Caco-2 (cell line): ENCODE measurements at regions of chr19 and their contacts with region 1.

Region 1: DNA sequence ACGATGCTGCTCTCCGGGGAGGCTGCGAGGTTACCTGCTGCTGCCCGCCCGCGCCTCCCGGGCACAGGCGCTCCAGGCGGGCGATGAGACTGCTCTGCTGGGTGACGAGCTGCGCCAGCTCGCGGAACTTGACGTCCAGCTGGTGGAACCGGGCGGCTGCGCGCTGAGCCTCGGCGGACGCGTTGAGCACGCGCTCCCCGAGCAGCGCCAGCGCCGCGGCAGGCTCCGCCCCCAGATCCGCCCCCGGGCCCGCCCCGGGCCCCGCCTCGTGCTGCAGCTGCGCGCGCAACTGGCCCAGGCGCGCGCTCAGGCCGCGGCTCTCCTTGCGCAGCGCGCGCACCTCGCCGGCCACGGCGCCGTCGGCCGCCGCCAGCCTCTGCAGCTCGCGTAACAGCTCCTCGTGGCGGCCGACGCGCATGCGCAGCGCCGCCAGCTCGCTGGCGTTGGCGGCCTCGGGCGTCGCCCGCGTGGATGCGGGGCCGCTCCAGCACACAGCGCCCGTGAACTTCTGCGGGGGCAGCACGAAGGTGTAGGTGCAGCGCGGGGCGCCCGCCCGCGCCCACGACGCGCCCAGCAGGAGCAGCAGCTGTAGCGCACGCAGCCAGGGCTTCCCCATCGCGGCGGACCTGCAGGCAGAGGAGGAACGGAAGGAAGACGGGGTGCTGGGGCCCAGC is 6.4 kb downstream of the ANGPTL6 start:
- DNase-seq: peak; percentile 85 to 94
- H3K4me3 ChIP-seq: peak overlapping the region; percentile 54
- H3K4me3 Mint-ChIP-seq: peak overlapping the region; percentile 67
- H3K27ac Mint-ChIP-seq: no peak overlapping the region
- H3K4me1 ChIP-seq: no peaks in the 10 kb centered on the region
- H3K4me1 Mint-ChIP-seq: no peaks in the 10 kb centered on the region
- H3K27me3 ChIP-seq: no peaks in the 10 kb centered on the region
- H3K27me3 Mint-ChIP-seq: peaks cover 2% of the 10 kb centered on the region
- CTCF ChIP-seq: no peak

Region 2: DNA sequence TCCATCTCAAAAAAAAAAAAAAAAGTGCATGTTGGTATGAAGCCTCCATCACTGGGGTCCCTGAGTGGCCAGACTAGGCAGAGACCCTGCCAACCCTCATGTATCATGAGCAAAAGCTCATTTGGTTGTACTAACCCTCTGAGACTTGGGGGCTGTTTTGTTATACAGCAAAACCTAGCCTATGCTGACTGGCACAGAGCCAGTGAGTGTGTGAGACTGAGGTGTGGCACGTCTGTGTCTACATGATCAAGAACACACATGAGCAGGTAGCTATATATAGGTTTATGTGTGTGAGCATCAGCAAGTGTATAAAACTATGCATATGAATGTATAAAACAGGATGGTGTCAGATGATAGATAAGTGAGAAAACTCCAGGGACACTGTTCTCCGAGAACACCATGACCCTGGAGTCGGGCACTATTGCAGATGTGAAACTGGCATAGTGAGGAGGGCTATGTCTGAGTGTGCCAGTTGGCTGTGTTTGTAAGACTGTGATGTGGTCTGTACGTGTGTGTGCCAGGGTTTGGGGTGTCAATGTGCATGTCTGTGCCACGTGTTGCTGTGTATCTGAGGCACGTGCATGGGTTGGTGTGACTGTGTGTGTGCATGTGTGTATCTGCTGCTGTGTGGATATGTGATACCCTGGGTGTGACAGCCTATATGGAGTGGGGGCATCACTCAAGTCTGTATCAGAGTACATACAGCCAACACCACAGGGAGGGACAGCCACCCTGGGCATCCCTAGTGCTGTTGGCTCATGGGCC is 204.3 kb before region 1 on chr19:
- CTCF ChIA-PET with region 1: interaction called, 10 read pairs
- POLR2A ChIA-PET with region 1: no interaction called
- intact Hi-C with region 1: no loop called
- DNase-seq: no peak
- H3K4me3 ChIP-seq: no peak overlapping the region
- H3K4me3 Mint-ChIP-seq: no peak overlapping the region
- H3K27ac Mint-ChIP-seq: no peak overlapping the region
- H3K4me1 ChIP-seq: no peaks in the 10 kb centered on the region
- H3K4me1 Mint-ChIP-seq: no peaks in the 10 kb centered on the region
- H3K27me3 ChIP-seq: no peaks in the 10 kb centered on the region
- H3K27me3 Mint-ChIP-seq: peaks cover 11% of the 10 kb centered on the region
- CTCF ChIP-seq: no peak

Region 3: GRCh38 chr19:10106100-10106936 is 10.2 kb after region 1 on chr19 and contains the start of gene PPAN:
- CTCF ChIA-PET with region 1: interaction called, 10 read pairs
- POLR2A ChIA-PET with region 1: interaction called, 22 read pairs
- intact Hi-C with region 1: loop called (anchors 1 kb)
- DNase-seq: peak; percentile 97 to 98
- H3K4me3 ChIP-seq: peak within 1 kb of the TSS; percentile 92
- H3K4me3 Mint-ChIP-seq: peak within 1 kb of the TSS; percentile 87
- H3K27ac Mint-ChIP-seq: peak within 1 kb of the TSS; percentile 85
- H3K4me1 ChIP-seq: no peaks in the 10 kb centered on the region; the same call in 1 of the 2 replicates
- H3K4me1 Mint-ChIP-seq: peaks cover 11% of the 10 kb centered on the region
- H3K27me3 ChIP-seq: no peaks in the 10 kb centered on the region
- H3K27me3 Mint-ChIP-seq: no peaks in the 10 kb centered on the region
- CTCF ChIP-seq: no peak
- total RNA-seq, gene PPAN: 61.0 and 62.8 TPM in 2 replicates